Naive thymus-derived CD4-positive, alpha-beta T cell (primary cell): ENCODE measurements at regions of chr22 and their contacts with region 1.

Region 1: DNA sequence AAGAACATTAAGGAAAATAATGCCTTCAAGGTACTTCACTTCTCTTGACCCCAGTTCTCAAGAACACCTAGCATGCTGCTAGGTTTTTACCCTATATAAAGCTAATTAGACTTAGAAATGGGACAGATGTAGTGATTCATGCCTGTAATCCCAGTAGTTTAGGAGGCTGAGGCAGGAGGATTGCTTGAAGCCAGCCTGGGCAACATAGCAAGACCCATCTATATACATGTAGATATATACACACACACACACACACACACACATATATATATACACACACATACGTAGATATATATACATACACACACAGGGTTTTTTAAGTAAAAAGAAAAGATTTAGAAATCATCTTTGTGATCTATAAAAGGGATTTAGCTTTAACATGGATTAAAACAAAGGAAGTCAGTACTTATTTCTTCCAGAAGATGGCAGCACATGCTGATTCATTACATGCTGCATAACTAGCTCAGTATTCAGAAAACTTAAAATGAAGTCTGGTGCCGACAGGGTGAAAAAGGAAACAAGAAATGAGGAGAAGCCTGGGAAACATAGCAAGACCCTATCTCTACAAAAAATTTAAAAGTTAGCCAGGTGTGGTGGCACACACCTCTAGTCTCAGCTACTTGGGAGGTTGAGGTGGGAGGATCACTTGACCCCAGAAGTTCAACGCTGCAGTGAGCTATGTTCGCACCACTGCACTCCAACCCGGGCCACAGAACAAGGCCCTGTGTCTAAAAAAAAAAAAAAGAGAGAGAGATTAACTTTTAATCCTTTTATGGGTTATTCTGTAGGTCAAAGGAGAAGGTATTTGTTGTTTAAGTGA is 28.5 kb upstream of the RBX1 start:
- DNase-seq: peak in 7 of 9 donors; percentile 51 to 73 (median 67)
- ATAC-seq: peak; percentile 92
- H3K4me3 ChIP-seq: no peak overlapping the region
- H3K4me3 Mint-ChIP-seq: peak overlapping the region in 9 of 10 donors; percentile 1 to 79 (median 37)
- H3K27ac ChIP-seq: peak overlapping the region; percentile 2
- H3K27ac Mint-ChIP-seq: peak overlapping the region in 7 of 9 donors; percentile 47 to 88 (median 68)
- H3K4me1 ChIP-seq: peaks cover 0 to 4% of the 10 kb centered on the region in 2 donors
- H3K4me1 Mint-ChIP-seq: peaks cover 3 to 10% (median 5%) of the 10 kb centered on the region in 7 donors
- H3K27me3 ChIP-seq: no peaks in the 10 kb centered on the region
- H3K27me3 Mint-ChIP-seq: no peaks in the 10 kb centered on the region

Region 2: GRCh38 chr22:40990430-40990829 is 67.7 kb after region 1 on chr22:
- CTCF ChIA-PET with region 1: no interaction called
- POLR2A ChIA-PET with region 1: no interaction called
- intact Hi-C with region 1: no loop called
- DNase-seq: no peak
- ATAC-seq: no peak
- H3K4me3 ChIP-seq: no peak overlapping the region
- H3K4me3 Mint-ChIP-seq: no peak overlapping the region
- H3K27ac ChIP-seq: no peak overlapping the region
- H3K27ac Mint-ChIP-seq: no peak overlapping the region
- H3K4me1 ChIP-seq: no peaks in the 10 kb centered on the region
- H3K4me1 Mint-ChIP-seq: peaks cover 0 to 5% (median 0%) of the 10 kb centered on the region in 7 donors
- H3K27me3 ChIP-seq: no peaks in the 10 kb centered on the region
- H3K27me3 Mint-ChIP-seq: peaks cover 0 to 18% (median 14%) of the 10 kb centered on the region in 5 donors

Region 3: DNA sequence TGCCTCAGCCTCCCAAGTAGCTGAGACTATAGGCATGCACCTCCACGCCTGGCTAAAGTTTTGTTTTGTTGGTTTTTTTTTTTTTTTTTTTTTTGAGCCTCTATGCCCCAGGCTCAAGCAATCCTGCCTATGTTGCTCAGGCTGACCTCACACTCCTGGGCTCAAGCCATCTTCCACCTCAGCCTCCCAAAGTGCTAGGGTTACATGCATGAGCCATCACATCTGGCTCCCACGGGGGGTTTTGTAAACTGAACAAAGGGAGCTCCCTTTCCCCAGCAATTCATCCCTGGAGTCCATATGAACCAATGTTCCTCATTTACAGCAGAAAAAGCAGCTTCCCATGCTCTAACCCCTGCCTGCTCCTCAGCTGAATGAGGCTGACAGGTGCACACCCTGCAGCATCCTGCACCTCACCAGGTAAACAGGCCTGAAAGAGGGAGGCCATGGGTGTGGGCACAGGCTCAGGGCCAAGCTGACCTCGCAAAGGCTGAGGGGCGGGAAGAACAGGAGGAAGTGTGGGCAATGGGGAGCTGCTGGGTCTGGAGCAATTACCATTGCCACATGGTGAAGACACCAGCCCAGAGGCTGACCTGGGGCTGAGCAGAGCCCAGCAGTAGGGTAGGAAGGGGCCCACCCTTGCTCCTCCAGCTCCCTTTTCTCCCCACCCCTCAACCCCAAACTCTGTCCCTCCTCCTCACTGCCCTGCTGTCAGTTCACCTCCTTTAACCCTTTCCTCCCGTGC is 86.7 kb after region 1 on chr22:
- CTCF ChIA-PET with region 1: no interaction called
- POLR2A ChIA-PET with region 1: no interaction called
- intact Hi-C with region 1: no loop called
- DNase-seq: no peak
- ATAC-seq: peak; percentile 48
- H3K4me3 ChIP-seq: no peak overlapping the region
- H3K4me3 Mint-ChIP-seq: no peak overlapping the region
- H3K27ac ChIP-seq: no peak overlapping the region
- H3K27ac Mint-ChIP-seq: no peak overlapping the region
- H3K4me1 ChIP-seq: no peaks in the 10 kb centered on the region
- H3K4me1 Mint-ChIP-seq: no peaks in the 10 kb centered on the region
- H3K27me3 ChIP-seq: no peaks in the 10 kb centered on the region
- H3K27me3 Mint-ChIP-seq: peaks cover 0 to 7% (median 0%) of the 10 kb centered on the region in 5 donors

Region 4: GRCh38 chr22:41096391-41096790 is 173.7 kb after region 1 on chr22:
- CTCF ChIA-PET with region 1: interaction called, 5 read pairs
- POLR2A ChIA-PET with region 1: interaction called, 10 read pairs
- intact Hi-C with region 1: loop called (anchors 1 kb)
- DNase-seq: no peak
- ATAC-seq: no peak
- H3K4me3 ChIP-seq: no peak overlapping the region
- H3K4me3 Mint-ChIP-seq: peak overlapping the region; percentile 64 to 100 (median 92)
- H3K27ac ChIP-seq: peak overlapping the region; percentile 99
- H3K27ac Mint-ChIP-seq: peak overlapping the region in 4 of 9 donors; percentile 69 to 81 (median 70)
- H3K4me1 ChIP-seq: peaks cover 8 to 17% of the 10 kb centered on the region in 2 donors
- H3K4me1 Mint-ChIP-seq: peaks cover 55 to 78% (median 64%) of the 10 kb centered on the region in 7 donors
- H3K27me3 ChIP-seq: no peaks in the 10 kb centered on the region
- H3K27me3 Mint-ChIP-seq: peaks cover 0 to 2% (median 0%) of the 10 kb centered on the region in 5 donors

Region 5: DNA sequence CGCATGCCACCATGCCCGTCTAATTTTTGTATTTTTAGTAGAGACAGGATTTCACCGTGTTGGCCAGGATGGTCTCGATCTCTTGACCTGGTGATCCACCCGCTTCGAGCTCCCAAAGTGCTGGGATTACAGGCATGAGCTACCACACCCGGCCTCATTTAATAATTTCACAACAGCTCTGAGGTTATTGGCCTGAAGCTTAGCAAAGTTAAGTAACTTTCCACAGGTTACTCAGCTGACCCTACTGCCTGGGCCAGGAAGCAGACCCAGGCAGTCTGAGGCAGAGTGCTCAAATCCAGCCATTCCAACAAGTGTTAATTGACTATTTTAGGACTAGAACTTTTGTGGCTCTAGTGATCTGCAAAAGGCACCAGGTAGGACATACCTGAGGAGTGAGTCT is 230.2 kb after region 1 on chr22:
- CTCF ChIA-PET with region 1: interaction called, 4 read pairs
- POLR2A ChIA-PET with region 1: interaction called, 3 read pairs
- intact Hi-C with region 1: loop called in 1 of 2 experiments (anchors 5 kb)
- DNase-seq: no peak
- ATAC-seq: no peak
- H3K4me3 ChIP-seq: no peak overlapping the region
- H3K4me3 Mint-ChIP-seq: no peak overlapping the region
- H3K27ac ChIP-seq: no peak overlapping the region
- H3K27ac Mint-ChIP-seq: no peak overlapping the region
- H3K4me1 ChIP-seq: no peaks in the 10 kb centered on the region
- H3K4me1 Mint-ChIP-seq: peaks cover 0 to 5% (median 0%) of the 10 kb centered on the region in 7 donors
- H3K27me3 ChIP-seq: no peaks in the 10 kb centered on the region
- H3K27me3 Mint-ChIP-seq: no peaks in the 10 kb centered on the region

Region 6: GRCh38 chr22:41237707-41238569 is 315.2 kb after region 1 on chr22:
- CTCF ChIA-PET with region 1: interaction called, 59 read pairs
- POLR2A ChIA-PET with region 1: interaction called, 18 read pairs
- intact Hi-C with region 1: loop called (anchors 1 kb)
- DNase-seq: peak; percentile 74 to 86 (median 84)
- ATAC-seq: peak; percentile 96
- H3K4me3 ChIP-seq: peak overlapping the region; percentile 10
- H3K4me3 Mint-ChIP-seq: peak overlapping the region in 9 of 10 donors; percentile 54 to 78 (median 73)
- H3K27ac ChIP-seq: peak overlapping the region; percentile 57
- H3K27ac Mint-ChIP-seq: peak overlapping the region in 2 of 9 donors; percentile 44 to 63
- H3K4me1 ChIP-seq: peaks cover 0 to 11% of the 10 kb centered on the region in 2 donors
- H3K4me1 Mint-ChIP-seq: peaks cover 5 to 19% (median 11%) of the 10 kb centered on the region in 7 donors
- H3K27me3 ChIP-seq: no peaks in the 10 kb centered on the region
- H3K27me3 Mint-ChIP-seq: peaks cover 0 to 2% (median 0%) of the 10 kb centered on the region in 5 donors

Region 7: GRCh38 chr22:41526837-41527799 is 604.4 kb after region 1 on chr22:
- CTCF ChIA-PET with region 1: interaction called, 3 read pairs
- POLR2A ChIA-PET with region 1: no interaction called
- intact Hi-C with region 1: loop called in 1 of 2 experiments (anchors 10 kb)
- DNase-seq: peak; percentile 36 to 75 (median 64)
- ATAC-seq: peak; percentile 78
- H3K4me3 ChIP-seq: no peak overlapping the region
- H3K4me3 Mint-ChIP-seq: no peak overlapping the region
- H3K27ac ChIP-seq: peak overlapping the region; percentile 48
- H3K27ac Mint-ChIP-seq: peak overlapping the region in 7 of 9 donors; percentile 40 to 84 (median 77)
- H3K4me1 ChIP-seq: peaks cover 10 to 16% of the 10 kb centered on the region in 2 donors
- H3K4me1 Mint-ChIP-seq: peaks cover 0 to 25% (median 20%) of the 10 kb centered on the region in 7 donors
- H3K27me3 ChIP-seq: no peaks in the 10 kb centered on the region
- H3K27me3 Mint-ChIP-seq: no peaks in the 10 kb centered on the region

Region 8: DNA sequence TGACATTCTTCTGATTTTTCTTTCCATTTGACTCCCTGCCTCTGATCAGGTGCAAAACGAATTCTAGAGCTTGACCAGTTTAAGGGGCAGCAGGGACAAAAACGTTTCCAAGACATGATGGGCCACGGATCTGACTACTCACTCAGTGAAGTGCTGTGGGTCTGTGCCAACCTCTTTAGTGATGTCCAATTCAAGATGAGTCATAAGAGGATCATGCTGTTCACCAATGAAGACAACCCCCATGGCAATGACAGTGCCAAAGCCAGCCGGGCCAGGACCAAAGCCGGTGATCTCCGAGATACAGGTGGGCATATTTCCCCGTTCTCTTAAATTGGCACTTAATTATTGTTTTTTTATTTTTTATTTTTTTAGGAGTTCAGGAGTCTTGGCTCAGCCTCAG is 713.8 kb after region 1 on chr22:
- CTCF ChIA-PET with region 1: no interaction called
- POLR2A ChIA-PET with region 1: no interaction called
- intact Hi-C with region 1: no loop called
- DNase-seq: no peak
- ATAC-seq: no peak
- H3K4me3 ChIP-seq: no peak overlapping the region
- H3K4me3 Mint-ChIP-seq: no peak overlapping the region
- H3K27ac ChIP-seq: no peak overlapping the region
- H3K27ac Mint-ChIP-seq: no peak overlapping the region
- H3K4me1 ChIP-seq: no peaks in the 10 kb centered on the region
- H3K4me1 Mint-ChIP-seq: peaks cover 0 to 12% (median 4%) of the 10 kb centered on the region in 7 donors
- H3K27me3 ChIP-seq: no peaks in the 10 kb centered on the region
- H3K27me3 Mint-ChIP-seq: no peaks in the 10 kb centered on the region